Endothelial cell of umbilical vein (primary cell): ENCODE measurements at regions of chr19 and their contacts with region 1.

Region 1: GRCh38 chr19:57769345-57770131 is at the start of gene ZNF586:
- DNase-seq: peak; percentile 92
- H3K4me3 ChIP-seq: peak within 1 kb of the TSS; percentile 18 to 83 (median 47)
- H3K27ac ChIP-seq: no peak within 1 kb of the TSS
- H3K4me1 ChIP-seq: peaks cover 5% of the 10 kb centered on the region
- H3K27me3 ChIP-seq: no peaks in the 10 kb centered on the region
- CTCF ChIP-seq: no peak
- POLR2A ChIP-seq: peak; percentile 81
- total RNA-seq, gene ZNF586: 12.6 and 14.7 TPM in 2 replicates

Region 2: DNA sequence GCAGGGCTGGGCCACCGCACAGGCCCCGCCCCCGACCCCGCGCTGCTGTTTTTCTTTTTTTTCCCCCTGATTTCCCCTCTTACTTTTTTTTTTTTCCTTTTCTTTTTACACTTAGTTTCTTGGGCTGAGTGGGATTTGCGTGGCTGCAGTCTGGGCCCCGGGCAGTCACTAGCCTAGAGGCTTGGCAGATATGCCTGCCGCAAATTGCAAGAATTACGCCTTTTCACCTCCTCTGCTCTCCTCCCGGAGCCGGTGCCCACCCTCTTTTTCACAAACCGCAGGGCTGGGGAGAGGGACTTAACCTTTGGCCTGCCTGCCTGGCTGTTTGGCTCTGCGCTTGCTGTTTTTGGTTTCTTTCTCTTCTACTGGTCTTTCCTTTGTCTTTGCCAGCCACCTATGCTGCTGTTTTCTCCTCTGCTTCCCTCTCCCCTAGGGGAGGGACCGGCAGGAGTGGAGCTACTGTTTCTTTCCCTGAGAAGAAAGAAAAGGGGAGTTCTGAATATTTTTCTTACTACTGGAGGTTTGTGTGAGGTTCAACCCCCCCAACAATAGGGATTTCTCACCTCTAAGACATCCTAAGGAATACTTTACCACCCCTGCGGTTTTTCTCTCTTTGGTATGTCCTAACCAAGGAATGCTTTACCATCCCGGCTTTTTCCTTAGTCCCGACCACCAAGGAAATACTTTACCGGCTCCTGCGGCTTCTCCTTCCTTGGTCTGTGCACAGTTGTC is 34.2 kb after region 1 on chr19:
- CTCF ChIA-PET with region 1: no interaction called
- POLR2A ChIA-PET with region 1: no interaction called
- dilution Hi-C with region 1: no loop called
- intact Hi-C with region 1: loop called (anchors 1 kb)
- DNase-seq: peak; percentile 71
- H3K4me3 ChIP-seq: peak overlapping the region; percentile 41 to 78 (median 47)
- H3K27ac ChIP-seq: peak overlapping the region; percentile 69
- H3K4me1 ChIP-seq: peaks cover 26% of the 10 kb centered on the region
- H3K27me3 ChIP-seq: no peaks in the 10 kb centered on the region
- CTCF ChIP-seq: no peak
- POLR2A ChIP-seq: no peak

Region 3: DNA sequence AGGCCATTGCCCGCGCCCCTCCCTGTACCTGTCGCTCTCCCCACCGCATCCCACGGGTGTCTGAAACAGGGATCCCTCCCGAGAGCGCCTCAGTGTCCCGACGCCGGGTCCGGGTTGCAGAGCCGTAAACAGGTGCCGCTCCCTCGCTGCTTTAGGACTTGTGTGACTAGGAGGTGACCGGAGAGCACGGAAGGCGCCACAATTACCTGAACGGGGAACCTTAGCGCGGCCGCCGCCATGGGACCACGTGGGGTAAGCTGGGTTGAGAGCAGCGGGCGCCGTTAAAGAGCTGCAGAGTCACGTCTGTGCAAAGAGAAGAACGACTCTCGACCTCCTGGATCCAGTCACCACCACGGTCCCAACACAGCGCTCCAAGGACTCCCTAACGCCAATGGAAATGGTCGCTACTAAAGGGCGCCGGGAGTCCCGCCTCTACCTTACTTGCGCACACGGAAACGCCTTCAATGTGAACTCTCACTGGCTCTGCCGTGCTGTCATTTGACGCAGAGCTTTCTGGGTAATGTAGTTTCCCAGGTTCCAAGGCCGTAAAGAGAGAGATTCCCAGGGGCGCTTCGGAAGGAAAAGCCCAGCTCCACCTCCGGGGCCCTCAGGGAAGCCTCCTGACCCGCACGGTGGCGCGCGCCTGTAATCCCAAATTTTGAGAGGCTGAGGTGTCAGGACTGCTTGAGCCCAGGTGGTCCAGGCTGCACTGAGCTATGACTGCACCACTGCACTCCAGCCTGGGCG is 45.1 kb after region 1 on chr19 and contains the start of gene ZNF552:
- CTCF ChIA-PET with region 1: interaction called, 3 read pairs
- POLR2A ChIA-PET with region 1: no interaction called
- dilution Hi-C with region 1: no loop called
- intact Hi-C with region 1: loop called (anchors 1 kb)
- DNase-seq: peak; percentile 93
- H3K4me3 ChIP-seq: peak within 1 kb of the TSS; percentile 72 to 85 (median 76)
- H3K27ac ChIP-seq: peak within 1 kb of the TSS; percentile 26
- H3K4me1 ChIP-seq: peaks cover 2% of the 10 kb centered on the region
- H3K27me3 ChIP-seq: no peaks in the 10 kb centered on the region
- CTCF ChIP-seq: no peak
- POLR2A ChIP-seq: peak; percentile 90
- total RNA-seq, gene ZNF552: 6.1 and 6.5 TPM in 2 replicates

Region 4: GRCh38 chr19:57914531-57914930 is 145.0 kb after region 1 on chr19:
- CTCF ChIA-PET with region 1: no interaction called
- POLR2A ChIA-PET with region 1: no interaction called
- dilution Hi-C with region 1: no loop called
- intact Hi-C with region 1: loop called (anchors 1 kb)
- DNase-seq: no peak
- H3K4me3 ChIP-seq: no peak overlapping the region
- H3K27ac ChIP-seq: no peak overlapping the region
- H3K4me1 ChIP-seq: peaks cover 5% of the 10 kb centered on the region
- H3K27me3 ChIP-seq: no peaks in the 10 kb centered on the region
- CTCF ChIP-seq: no peak
- POLR2A ChIP-seq: no peak